Dorsolateral prefrontal cortex (tissue), 120 donors: ENCODE measurements at regions of chr12 and their contacts with region 1.

Region 1: GRCh38 chr12:56448860-56449621 is at the start of gene TIMELESS:
- DNase-seq: peak; percentile 78 to 94 (median 87)
- H3K4me3 ChIP-seq: peak within 1 kb of the TSS; percentile 48 to 94 (median 79)
- H3K27ac ChIP-seq: peak within 1 kb of the TSS; percentile 76 to 98 (median 92)
- H3K27me3 ChIP-seq: no peaks in the 10 kb centered on the region
- CTCF ChIP-seq: peak in 43 of 56 donors; percentile 9 to 66 (median 36)
- total RNA-seq, gene TIMELESS: 1.8 to 8.2 (median 4.4) TPM

Region 2: DNA sequence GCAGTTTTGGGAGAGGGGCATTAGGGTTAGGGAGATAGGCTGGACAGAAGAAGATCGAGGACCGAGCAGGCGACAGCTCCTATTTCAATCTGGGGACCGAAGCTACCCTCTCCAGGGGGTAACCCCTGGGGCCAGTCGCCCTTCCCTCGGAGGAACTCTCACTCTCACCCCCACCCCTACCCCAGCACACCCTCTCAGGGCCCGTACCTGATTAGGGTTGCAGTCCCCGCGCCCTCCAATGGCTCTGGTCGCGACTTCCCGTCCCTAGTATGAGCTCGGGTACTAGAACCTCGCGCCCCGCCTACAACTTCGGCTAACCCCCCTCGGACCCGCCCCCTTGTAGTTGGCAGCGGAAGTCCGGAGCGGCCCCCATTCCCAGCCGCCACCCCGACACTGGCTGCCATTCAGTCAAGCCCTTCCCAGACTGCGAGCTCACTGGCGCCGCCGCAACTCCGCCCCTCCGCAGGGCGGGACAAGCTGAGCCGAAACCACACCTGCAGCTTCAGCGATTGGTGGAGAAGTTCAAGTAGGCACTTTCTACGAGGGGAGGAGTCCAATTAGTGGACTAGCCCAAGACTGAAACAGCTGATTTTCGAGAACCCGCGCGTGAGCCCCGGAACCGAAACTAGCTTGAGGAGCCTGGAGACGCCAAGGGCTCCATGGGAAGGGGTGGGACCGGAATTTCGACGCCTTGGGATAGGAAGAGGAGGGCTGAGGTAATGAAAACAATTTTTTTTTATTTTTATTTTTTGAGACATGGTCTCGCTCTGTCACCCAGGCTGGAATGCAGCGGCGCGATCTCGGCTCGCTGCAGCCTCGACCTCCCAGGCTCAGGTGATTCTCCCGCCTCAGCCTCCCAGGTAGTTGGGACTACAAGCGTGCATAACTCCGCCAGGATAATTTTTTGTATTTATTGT is 88.9 kb before region 1 on chr12 and contains the start of gene STAT2:
- intact Hi-C with region 1: loop called (anchors 5 kb)
- DNase-seq: peak; percentile 95 to 99 (median 99)
- H3K4me3 ChIP-seq: peak within 1 kb of the TSS; percentile 62 to 99 (median 86)
- H3K27ac ChIP-seq: peak within 1 kb of the TSS; percentile 48 to 99 (median 93)
- H3K27me3 ChIP-seq: no peaks in the 10 kb centered on the region
- CTCF ChIP-seq: peak in 51 of 56 donors; percentile 3 to 70 (median 40)
- total RNA-seq, gene STAT2: 94.6 to 278 (median 154) TPM

Region 3: GRCh38 chr12:56803750-56804149 is 354.7 kb after region 1 on chr12:
- intact Hi-C with region 1: no loop called
- DNase-seq: peak in 1 of 10 donors; percentile 32
- H3K4me3 ChIP-seq: no peak overlapping the region
- H3K27ac ChIP-seq: no peak overlapping the region
- H3K27me3 ChIP-seq: no peaks in the 10 kb centered on the region
- CTCF ChIP-seq: no peak

Region 4: GRCh38 chr12:57296291-57296690 is 847.2 kb after region 1 on chr12:
- intact Hi-C with region 1: no loop called
- DNase-seq: no peak
- H3K4me3 ChIP-seq: no peak overlapping the region
- H3K27ac ChIP-seq: peak overlapping the region in 1 of 59 donors; percentile 44
- H3K27me3 ChIP-seq: no peaks in the 10 kb centered on the region
- CTCF ChIP-seq: no peak